Left lung (tissue), 14 donors: ENCODE measurements at regions of chr1 and their contacts with region 1.

Region 1: GRCh38 chr1:2233997-2234761 is 6.1 kb downstream of the SKI start:
- DNase-seq: peak; percentile 82 to 99 (median 92)
- ATAC-seq: peak; percentile 67
- H3K4me3 ChIP-seq: peak overlapping the region; percentile 8 to 93
- H3K27ac ChIP-seq: peak overlapping the region; percentile 89 to 93
- H3K4me1 ChIP-seq: peaks cover 74 to 98% of the 10 kb centered on the region in 2 donors
- H3K27me3 ChIP-seq: no peaks in the 10 kb centered on the region
- CTCF ChIP-seq: no peak

Region 2: DNA sequence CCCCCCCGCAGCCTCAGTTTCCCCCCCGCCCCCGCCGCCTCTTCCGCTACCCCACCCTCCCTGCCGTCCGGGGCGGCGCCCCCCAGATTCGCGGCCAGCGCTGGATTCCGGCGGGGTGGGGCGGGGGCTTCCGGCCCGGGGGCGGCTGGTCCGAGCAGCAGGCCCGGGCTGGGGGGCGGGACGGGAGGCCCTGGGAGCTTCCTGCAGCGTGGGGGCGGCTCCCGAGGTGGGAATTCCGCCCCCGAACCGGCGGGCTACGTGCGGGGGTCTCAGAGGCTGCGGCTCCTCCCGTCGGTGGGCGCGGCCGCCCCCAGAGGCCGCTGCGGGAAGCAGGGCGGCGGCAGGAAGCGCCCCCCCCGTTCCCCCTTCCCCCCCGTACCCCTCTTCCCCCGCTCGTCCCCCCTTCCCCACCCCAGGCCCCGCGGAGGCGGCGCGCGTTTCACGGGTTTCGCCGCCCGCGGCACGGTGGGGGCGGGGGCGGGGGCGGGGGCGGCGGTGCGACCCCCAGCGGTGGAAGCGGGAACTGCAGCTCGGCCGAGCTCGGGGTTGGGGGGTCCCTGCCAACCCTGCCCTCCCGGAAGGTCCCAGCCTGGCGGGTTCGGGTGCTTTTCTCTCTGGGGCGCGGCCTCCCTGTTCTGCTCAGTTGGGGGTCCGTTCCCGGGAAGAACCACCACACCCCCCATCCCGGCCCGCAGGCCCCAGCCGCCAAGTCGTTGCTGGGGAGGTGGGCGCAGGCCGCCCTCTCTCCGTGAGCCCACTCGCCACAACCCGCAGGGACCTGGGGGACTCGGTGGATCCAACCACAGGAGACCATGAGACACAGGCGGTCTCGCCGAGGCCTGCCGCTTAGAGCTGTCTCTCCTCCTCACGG is 80.9 kb after region 1 on chr1:
- intact Hi-C with region 1: loop called in 1 of 2 experiments (anchors 10 kb)
- DNase-seq: peak in 3 of 4 donors; percentile 61 to 86 (median 84)
- ATAC-seq: peak; percentile 57
- H3K4me3 ChIP-seq: peak overlapping the region; percentile 53 to 55
- H3K27ac ChIP-seq: peak overlapping the region; percentile 86 to 92
- H3K4me1 ChIP-seq: peaks cover 27 to 64% of the 10 kb centered on the region in 2 donors
- H3K27me3 ChIP-seq: peaks cover 0 to 35% of the 10 kb centered on the region in 2 donors
- CTCF ChIP-seq: peak; percentile 94 to 99